ENCODE measurements at regions of chr7 and their contacts with region 1.

Region 1: GRCh38 chr7:28037220-28038010 is 143.2 kb downstream of the JAZF1 start:
- DNase-seq: peak; percentile 56
- ATAC-seq: peak; percentile 91
- H3K4me3 Mint-ChIP-seq: peak overlapping the region; percentile 12
- H3K27ac Mint-ChIP-seq: no peak overlapping the region
- H3K4me1 Mint-ChIP-seq: peaks cover 36% of the 10 kb centered on the region
- H3K27me3 Mint-ChIP-seq: peaks cover 10% of the 10 kb centered on the region

Region 2: DNA sequence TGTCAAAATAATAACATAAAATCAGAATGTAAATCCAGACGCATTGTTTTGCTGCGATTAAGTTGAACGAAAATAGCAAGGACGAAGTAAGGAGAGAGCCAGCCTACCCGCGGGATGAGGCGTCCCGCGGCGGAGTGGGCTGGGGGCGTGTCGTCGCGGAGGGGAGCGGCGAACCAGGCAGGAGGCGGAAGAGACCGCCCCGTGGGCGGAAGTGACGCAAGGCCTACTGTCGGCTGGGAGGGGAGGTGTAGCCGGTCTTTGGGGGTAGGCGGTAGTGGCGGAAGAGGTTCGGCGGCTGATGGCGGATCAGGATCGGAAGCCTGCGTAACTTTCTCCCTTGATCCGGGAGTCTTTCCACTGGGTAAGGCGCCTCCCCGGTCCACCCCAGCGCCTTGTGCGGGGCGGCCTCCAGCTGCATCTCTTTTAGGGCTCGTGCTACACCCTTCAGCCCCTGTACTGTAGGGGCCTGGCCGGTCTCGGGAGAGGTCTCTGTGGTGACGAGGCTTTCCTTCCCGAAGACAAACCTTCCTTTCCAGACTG is 297.4 kb before region 1 on chr7 and contains the start of gene TAX1BP1:
- CTCF ChIA-PET with region 1: no interaction called
- POLR2A ChIA-PET with region 1: no interaction called
- intact Hi-C with region 1: loop called in 1 of 2 experiments (anchors 1 kb)
- DNase-seq: peak; percentile 98
- ATAC-seq: peak; percentile 92
- H3K4me3 Mint-ChIP-seq: peak within 1 kb of the TSS; percentile 99
- H3K27ac Mint-ChIP-seq: peak within 1 kb of the TSS; percentile 99
- H3K4me1 Mint-ChIP-seq: peaks cover 34% of the 10 kb centered on the region
- H3K27me3 Mint-ChIP-seq: no peaks in the 10 kb centered on the region
- total RNA-seq, gene TAX1BP1: 101 to 109 TPM

Region 3: DNA sequence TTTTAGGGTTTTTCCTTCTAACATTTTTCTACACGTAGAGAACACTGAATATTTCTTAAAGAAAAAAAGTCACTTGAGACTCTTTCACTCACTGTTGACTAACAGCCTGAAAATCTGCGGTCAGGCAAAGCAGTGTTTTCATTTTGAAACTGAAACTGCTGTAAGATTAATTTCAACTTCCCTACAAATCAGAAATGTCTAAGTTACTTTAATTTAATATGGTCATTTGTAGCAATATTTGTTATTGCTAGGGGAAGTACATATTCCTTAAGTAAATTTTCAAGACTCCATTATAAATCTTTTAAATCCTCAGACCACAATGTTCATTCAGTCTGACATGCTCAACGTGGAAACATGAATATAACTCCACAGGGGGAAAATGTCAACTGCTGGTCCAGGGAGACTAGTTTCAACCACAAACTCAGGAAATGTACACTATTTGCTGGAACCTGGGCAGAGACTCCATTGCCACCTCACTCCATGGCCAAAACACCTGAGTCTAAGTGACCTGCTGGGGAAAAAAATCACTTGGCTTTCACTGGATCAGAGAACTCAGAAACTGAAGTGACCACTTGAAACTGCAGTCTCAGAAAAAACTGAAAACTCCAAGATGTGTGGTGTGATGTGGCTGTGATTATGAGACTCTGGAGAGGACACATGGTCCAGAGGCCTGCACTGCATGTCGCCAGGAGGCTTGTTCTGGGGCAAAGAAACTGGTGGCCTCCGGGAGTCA is 136.2 kb before region 1 on chr7:
- CTCF ChIA-PET with region 1: no interaction called
- POLR2A ChIA-PET with region 1: no interaction called
- intact Hi-C with region 1: loop called (anchors 1 to 2 kb)
- DNase-seq: peak; percentile 49
- ATAC-seq: peak; percentile 67
- H3K4me3 Mint-ChIP-seq: no peak overlapping the region
- H3K27ac Mint-ChIP-seq: no peak overlapping the region
- H3K4me1 Mint-ChIP-seq: peaks cover 37% of the 10 kb centered on the region
- H3K27me3 Mint-ChIP-seq: no peaks in the 10 kb centered on the region

Region 4: GRCh38 chr7:28329661-28330363 is 292.4 kb after region 1 on chr7:
- CTCF ChIA-PET with region 1: no interaction called
- POLR2A ChIA-PET with region 1: no interaction called
- intact Hi-C with region 1: loop called in 1 of 2 experiments (anchors 1 kb)
- DNase-seq: peak; percentile 26
- ATAC-seq: peak; percentile 56
- H3K4me3 Mint-ChIP-seq: peak overlapping the region; percentile 4
- H3K27ac Mint-ChIP-seq: no peak overlapping the region
- H3K4me1 Mint-ChIP-seq: peaks cover 36% of the 10 kb centered on the region
- H3K27me3 Mint-ChIP-seq: peaks cover 6% of the 10 kb centered on the region

Measured in activated CD4-positive, alpha-beta T cell treated with anti-CD3 and anti-CD28 coated beads for 36 hours (primary cell).